ENCODE measurements at regions of chr18 and their contacts with region 1.

Region 1: DNA sequence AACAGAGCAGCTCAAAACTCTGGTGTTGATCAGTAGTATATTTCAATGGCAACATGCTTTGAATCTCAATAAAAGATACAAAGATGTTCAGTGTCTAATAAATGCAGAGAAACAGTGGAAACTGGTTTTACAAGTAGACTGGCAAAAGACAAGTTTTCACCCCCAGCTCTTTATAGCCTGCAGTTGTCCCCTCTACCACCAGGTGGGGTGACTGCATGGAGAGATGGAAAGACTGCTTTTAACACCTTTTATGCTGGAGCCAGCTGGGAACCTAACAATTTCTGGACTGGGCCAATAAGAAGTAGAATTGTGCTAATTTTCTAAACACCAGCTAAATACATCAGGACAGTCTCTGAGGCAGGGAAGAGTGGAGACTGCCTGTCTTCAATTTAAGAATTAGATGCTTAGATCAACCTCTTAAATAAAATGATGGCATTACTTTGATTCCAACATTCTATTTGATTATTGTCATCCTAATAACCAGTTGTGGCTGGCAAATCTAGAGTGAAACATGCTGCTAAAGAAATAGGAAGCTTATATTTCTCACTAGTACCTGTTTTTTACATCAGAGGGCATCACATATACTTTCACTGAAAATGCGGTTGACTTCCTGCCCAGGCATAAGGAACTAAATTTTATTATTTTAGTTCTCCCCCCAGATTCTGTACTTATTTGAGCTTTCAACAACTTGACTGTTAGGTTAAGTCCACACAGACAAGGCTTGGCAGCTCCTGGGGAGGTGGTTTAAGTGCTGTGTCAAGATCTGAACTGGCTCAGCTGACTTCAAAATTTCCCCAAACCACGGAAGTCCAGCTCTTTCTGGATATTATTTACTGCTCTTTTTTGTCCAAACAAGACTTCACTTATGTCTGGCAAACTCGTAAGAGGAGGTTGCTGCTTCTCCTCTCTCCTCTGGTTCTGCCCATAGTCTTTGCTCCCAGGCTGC is 140.5 kb downstream of the TPGS2 start:
- DNase-seq: no peak
- ATAC-seq: no peak

Region 2: GRCh38 chr18:36638224-36638623 is 50.1 kb before region 1 on chr18:
- intact Hi-C with region 1: no loop called
- DNase-seq: no peak
- ATAC-seq: no peak

Region 3: DNA sequence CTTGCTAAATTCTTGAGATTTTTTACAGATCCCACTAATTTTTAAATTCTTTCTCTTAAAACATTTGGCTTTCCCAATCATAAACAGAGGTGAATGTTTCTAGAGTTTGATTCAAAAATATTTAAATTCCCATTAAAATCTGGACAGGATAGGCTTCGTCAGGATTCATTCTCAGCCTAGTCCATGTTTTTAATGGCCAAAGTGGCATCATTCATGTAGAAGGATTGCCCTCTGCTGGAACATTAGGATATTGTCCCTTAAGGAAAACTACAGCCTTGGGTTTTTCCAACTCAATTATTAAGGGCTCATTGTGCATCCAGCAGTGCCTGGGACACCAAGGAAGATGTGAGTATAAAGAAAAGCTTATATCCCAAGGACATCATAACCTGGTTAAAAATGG is 68.8 kb after region 1 on chr18:
- intact Hi-C with region 1: loop called (anchors 5 kb)
- DNase-seq: no peak
- ATAC-seq: no peak

Region 4: DNA sequence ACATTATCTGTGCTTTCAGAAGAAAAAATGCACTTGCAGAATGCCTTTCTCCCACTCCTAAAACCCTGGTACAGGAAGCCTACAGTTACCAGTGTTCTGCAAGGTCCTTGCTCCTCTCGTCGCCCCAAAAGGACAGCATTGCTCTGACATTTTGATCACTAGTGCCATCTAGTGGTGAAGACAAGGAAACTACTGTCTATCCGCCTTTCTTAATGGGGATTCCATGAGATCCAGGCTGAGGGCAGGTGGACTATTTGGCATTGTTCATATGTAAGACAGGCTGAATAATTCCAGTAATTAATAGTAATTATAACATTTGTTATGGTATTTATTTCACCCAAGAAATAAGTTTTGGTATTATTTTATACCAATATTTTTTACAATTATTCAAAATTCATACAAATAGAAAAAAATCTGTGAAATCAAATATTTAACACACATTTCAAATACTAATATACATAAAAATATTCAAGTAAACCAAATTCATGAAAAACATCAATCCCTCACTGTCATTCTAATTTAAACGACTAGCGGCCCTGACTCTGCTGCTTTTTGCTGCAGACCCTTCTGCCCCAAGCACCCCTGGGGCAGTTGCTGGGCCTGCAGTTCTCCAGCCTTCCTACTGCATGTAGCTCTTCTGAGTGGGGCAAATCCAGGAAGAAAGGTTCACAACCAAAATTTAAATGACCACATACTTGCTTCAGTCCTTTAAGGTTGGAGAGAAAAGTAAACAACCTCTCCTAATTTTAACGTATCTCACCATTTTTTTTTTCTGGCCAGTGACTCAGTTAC is 121.5 kb after region 1 on chr18:
- intact Hi-C with region 1: loop called (anchors 5 kb)
- DNase-seq: no peak
- ATAC-seq: peak; percentile 73